Caco-2 (cell line): ENCODE measurements at regions of chr15 and their contacts with region 1.

Region 1: GRCh38 chr15:63461230-63461985 is 43.0 kb upstream of the USP3 start:
- DNase-seq: peak; percentile 77 to 79
- H3K4me3 ChIP-seq: peak overlapping the region; percentile 41
- H3K4me3 Mint-ChIP-seq: peak overlapping the region; percentile 83
- H3K27ac Mint-ChIP-seq: peak overlapping the region; percentile 98
- H3K4me1 ChIP-seq: peaks cover 34% of the 10 kb centered on the region
- H3K4me1 Mint-ChIP-seq: peaks cover 28% of the 10 kb centered on the region
- H3K27me3 ChIP-seq: no peaks in the 10 kb centered on the region
- H3K27me3 Mint-ChIP-seq: no peaks in the 10 kb centered on the region
- CTCF ChIP-seq: peak in 1 of 2 experiments; percentile 65

Region 2: DNA sequence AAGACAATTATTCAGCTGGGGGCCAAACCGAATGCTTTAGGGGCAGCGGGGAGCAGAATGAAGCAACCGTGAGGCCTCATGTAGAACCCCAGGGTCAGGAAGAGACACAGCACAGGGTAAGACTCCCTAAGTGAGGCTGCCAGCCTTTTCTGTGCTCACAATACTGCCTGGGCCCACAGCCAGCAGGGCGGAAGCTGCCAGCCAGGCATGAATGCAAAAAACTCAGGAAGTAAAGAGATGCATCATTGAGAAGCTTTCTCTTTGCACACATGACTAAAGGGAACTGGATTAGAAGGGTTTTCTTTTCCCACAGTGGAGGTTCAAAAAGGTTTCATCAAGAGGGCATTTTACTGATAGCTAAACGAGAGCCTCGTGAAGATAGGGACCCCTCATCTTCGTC is 113.0 kb before region 1 on chr15:
- CTCF ChIA-PET with region 1: no interaction called
- POLR2A ChIA-PET with region 1: no interaction called
- intact Hi-C with region 1: no loop called
- DNase-seq: no peak
- H3K4me3 ChIP-seq: no peak overlapping the region
- H3K4me3 Mint-ChIP-seq: no peak overlapping the region
- H3K27ac Mint-ChIP-seq: no peak overlapping the region
- H3K4me1 ChIP-seq: no peaks in the 10 kb centered on the region
- H3K4me1 Mint-ChIP-seq: no peaks in the 10 kb centered on the region
- H3K27me3 ChIP-seq: no peaks in the 10 kb centered on the region
- H3K27me3 Mint-ChIP-seq: no peaks in the 10 kb centered on the region
- CTCF ChIP-seq: no peak

Region 3: DNA sequence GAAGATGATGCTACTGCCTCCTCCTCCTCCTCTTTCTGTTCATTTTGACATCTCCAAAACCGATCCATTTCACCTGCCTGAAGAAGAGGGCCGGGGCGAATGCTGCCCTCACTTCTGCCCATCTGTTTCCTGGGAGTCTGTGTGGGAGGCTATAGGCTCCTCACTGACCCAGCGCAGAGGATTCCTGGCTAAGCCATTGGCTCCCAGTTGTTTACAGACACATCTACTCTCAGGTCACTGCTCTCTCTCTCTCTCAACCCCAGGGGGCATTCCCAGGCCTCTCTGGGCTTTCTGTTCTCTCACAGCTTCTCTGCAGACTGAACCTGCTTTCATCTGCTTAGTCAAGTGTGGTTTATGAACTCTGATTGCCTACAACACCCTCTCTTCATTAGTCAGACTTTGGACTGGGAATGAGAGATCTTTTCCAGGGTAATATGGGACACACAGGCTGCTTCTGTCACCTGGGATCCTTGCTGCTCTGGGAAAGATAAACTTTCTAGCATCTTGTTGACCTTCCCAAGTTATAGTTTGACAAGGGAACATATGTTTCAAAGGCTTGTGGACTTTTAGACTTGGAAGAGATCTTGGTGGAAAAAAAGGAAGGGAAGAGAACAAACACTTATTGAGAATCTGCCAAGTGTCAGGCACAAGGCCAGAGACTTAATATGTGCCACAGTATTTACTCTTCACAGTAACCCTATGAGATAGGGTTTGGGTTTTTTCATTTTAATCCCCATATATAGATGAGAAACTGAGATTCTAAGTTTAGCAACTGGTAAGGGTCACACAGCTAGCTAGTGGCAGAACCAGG is 12.8 kb after region 1 on chr15:
- CTCF ChIA-PET with region 1: no interaction called
- POLR2A ChIA-PET with region 1: interaction called, 4 read pairs
- intact Hi-C with region 1: loop called (anchors 1 kb)
- DNase-seq: peak; percentile 82 to 92
- H3K4me3 ChIP-seq: no peak overlapping the region
- H3K4me3 Mint-ChIP-seq: peak overlapping the region; percentile 59
- H3K27ac Mint-ChIP-seq: peak overlapping the region; percentile 74
- H3K4me1 ChIP-seq: peaks cover 45% of the 10 kb centered on the region
- H3K4me1 Mint-ChIP-seq: peaks cover 43% of the 10 kb centered on the region
- H3K27me3 ChIP-seq: no peaks in the 10 kb centered on the region
- H3K27me3 Mint-ChIP-seq: no peaks in the 10 kb centered on the region
- CTCF ChIP-seq: peak in 1 of 2 experiments; percentile 23

Region 4: GRCh38 chr15:63582718-63583426 is 121.5 kb after region 1 on chr15:
- CTCF ChIA-PET with region 1: no interaction called
- POLR2A ChIA-PET with region 1: no interaction called
- intact Hi-C with region 1: no loop called
- DNase-seq: no peak
- H3K4me3 ChIP-seq: no peak overlapping the region
- H3K4me3 Mint-ChIP-seq: no peak overlapping the region
- H3K27ac Mint-ChIP-seq: peak overlapping the region; percentile 3
- H3K4me1 ChIP-seq: no peaks in the 10 kb centered on the region
- H3K4me1 Mint-ChIP-seq: no peaks in the 10 kb centered on the region
- H3K27me3 ChIP-seq: no peaks in the 10 kb centered on the region
- H3K27me3 Mint-ChIP-seq: no peaks in the 10 kb centered on the region
- CTCF ChIP-seq: no peak

Region 5: DNA sequence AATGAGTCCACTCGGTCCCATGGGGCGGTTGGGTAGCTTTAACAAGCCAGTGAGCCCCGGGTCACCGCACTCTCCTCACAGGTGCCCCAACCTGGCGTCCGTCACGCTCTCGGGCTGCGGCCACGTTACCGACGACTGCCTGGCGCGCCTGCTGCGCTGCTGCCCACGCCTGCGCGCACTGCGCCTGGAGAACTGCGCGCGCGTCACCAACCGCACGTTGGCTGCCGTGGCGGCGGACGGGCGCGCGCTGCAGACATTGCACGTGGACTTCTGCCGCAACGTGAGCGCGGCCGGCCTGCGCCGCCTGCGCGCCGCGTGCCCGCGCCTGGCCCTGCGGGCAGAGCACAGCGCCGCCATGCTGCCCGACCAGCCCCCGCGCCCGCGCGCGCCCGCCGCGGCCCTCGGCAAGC is 139.2 kb after region 1 on chr15:
- CTCF ChIA-PET with region 1: interaction called, 5 read pairs
- POLR2A ChIA-PET with region 1: no interaction called
- intact Hi-C with region 1: loop called (anchors 2 kb)
- DNase-seq: peak; percentile 89 to 94
- H3K4me3 ChIP-seq: peak overlapping the region; percentile 92
- H3K4me3 Mint-ChIP-seq: peak overlapping the region; percentile 90
- H3K27ac Mint-ChIP-seq: peak overlapping the region; percentile 74
- H3K4me1 ChIP-seq: no peaks in the 10 kb centered on the region; the same call in 1 of the 2 replicates
- H3K4me1 Mint-ChIP-seq: no peaks in the 10 kb centered on the region
- H3K27me3 ChIP-seq: no peaks in the 10 kb centered on the region
- H3K27me3 Mint-ChIP-seq: no peaks in the 10 kb centered on the region
- CTCF ChIP-seq: no peak